ENCODE measurements at regions of chr12 and their contacts with region 1.

Region 1: GRCh38 chr12:105983622-105984320 is 155.0 kb downstream of the NUAK1 start:
- DNase-seq: peak; percentile 86
- H3K4me3 ChIP-seq: no peak overlapping the region
- H3K27ac ChIP-seq: peak overlapping the region; percentile 80
- H3K27me3 ChIP-seq: no peaks in the 10 kb centered on the region
- CTCF ChIP-seq: no peak

Region 2: DNA sequence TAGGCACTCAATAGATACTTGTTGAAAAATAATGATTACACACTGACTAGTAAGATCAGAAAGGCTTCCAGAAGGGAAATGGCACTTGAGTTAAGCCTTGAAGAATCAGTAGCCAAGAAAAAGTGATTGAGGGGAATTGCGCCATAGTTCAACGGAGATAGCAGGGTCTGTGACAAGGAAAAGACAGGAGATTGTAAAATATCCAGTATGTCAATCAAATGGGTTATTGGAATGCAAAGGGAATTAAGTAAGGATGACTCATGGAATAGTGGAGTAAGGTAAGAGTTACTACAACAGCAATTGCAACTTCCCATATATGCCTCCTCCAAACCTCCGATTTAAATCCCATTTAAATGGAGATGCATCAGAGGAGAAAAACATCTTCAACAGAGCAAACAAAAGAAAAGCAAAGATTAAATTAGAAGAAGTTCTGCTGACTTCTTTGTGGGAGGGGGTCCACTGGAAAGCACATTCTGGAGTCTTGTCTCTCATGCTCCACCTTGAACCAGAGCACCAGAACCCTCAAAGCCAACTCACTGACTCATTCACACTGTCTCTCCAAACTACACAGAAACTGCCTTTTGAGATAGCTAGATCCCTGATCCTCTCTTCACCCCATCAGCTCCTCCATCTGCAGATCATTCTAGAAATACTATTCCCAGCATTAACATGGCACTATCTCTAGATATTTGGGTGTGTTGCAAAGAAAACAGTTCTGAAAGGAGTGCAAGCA is 16.8 kb after region 1 on chr12:
- CTCF ChIA-PET with region 1: no interaction called
- POLR2A ChIA-PET with region 1: no interaction called
- DNase-seq: no peak
- H3K4me3 ChIP-seq: no peak overlapping the region
- H3K27ac ChIP-seq: no peak overlapping the region
- H3K27me3 ChIP-seq: no peaks in the 10 kb centered on the region
- CTCF ChIP-seq: no peak

Region 3: GRCh38 chr12:106030210-106031175 is 46.7 kb after region 1 on chr12:
- CTCF ChIA-PET with region 1: no interaction called
- POLR2A ChIA-PET with region 1: interaction called, 12 read pairs
- DNase-seq: peak; percentile 82
- H3K4me3 ChIP-seq: peak overlapping the region; percentile 38
- H3K27ac ChIP-seq: peak overlapping the region; percentile 88
- H3K27me3 ChIP-seq: no peaks in the 10 kb centered on the region
- CTCF ChIP-seq: no peak

Measured in AG04450 (cell line).